Activated CD4-positive, alpha-beta T cell treated with anti-CD3 and anti-CD28 coated beads for 36 hours (primary cell): ENCODE measurements at regions of chr7 and their contacts with region 1.

Region 1: GRCh38 chr7:92904292-92905131 is 68.1 kb upstream of the CDK6 start:
- DNase-seq: peak; percentile 94
- ATAC-seq: peak; percentile 96
- H3K4me3 Mint-ChIP-seq: peak overlapping the region; percentile 19
- H3K27ac Mint-ChIP-seq: peak overlapping the region; percentile 89
- H3K4me1 Mint-ChIP-seq: peaks cover 30% of the 10 kb centered on the region
- H3K27me3 Mint-ChIP-seq: peaks cover 4% of the 10 kb centered on the region

Region 2: GRCh38 chr7:92682903-92683539 is 221.5 kb before region 1 on chr7:
- CTCF ChIA-PET with region 1: no interaction called
- POLR2A ChIA-PET with region 1: no interaction called
- intact Hi-C with region 1: loop called in 1 of 2 experiments (anchors 2 kb)
- DNase-seq: no peak
- ATAC-seq: peak; percentile 53
- H3K4me3 Mint-ChIP-seq: peak overlapping the region; percentile 39
- H3K27ac Mint-ChIP-seq: peak overlapping the region; percentile 88
- H3K4me1 Mint-ChIP-seq: peaks cover 83% of the 10 kb centered on the region
- H3K27me3 Mint-ChIP-seq: no peaks in the 10 kb centered on the region

Region 3: GRCh38 chr7:92731335-92732063 is 173.0 kb before region 1 on chr7:
- CTCF ChIA-PET with region 1: no interaction called
- POLR2A ChIA-PET with region 1: no interaction called
- intact Hi-C with region 1: loop called (anchors 1 kb)
- DNase-seq: peak; percentile 68
- ATAC-seq: peak; percentile 72
- H3K4me3 Mint-ChIP-seq: peak overlapping the region; percentile 21
- H3K27ac Mint-ChIP-seq: peak overlapping the region; percentile 88
- H3K4me1 Mint-ChIP-seq: peaks cover 61% of the 10 kb centered on the region
- H3K27me3 Mint-ChIP-seq: no peaks in the 10 kb centered on the region

Region 4: GRCh38 chr7:92806496-92806895 is 98.0 kb before region 1 on chr7:
- CTCF ChIA-PET with region 1: no interaction called
- POLR2A ChIA-PET with region 1: no interaction called
- intact Hi-C with region 1: no loop called
- DNase-seq: no peak
- ATAC-seq: no peak
- H3K4me3 Mint-ChIP-seq: no peak overlapping the region
- H3K27ac Mint-ChIP-seq: no peak overlapping the region
- H3K4me1 Mint-ChIP-seq: peaks cover 63% of the 10 kb centered on the region
- H3K27me3 Mint-ChIP-seq: no peaks in the 10 kb centered on the region

Region 5: DNA sequence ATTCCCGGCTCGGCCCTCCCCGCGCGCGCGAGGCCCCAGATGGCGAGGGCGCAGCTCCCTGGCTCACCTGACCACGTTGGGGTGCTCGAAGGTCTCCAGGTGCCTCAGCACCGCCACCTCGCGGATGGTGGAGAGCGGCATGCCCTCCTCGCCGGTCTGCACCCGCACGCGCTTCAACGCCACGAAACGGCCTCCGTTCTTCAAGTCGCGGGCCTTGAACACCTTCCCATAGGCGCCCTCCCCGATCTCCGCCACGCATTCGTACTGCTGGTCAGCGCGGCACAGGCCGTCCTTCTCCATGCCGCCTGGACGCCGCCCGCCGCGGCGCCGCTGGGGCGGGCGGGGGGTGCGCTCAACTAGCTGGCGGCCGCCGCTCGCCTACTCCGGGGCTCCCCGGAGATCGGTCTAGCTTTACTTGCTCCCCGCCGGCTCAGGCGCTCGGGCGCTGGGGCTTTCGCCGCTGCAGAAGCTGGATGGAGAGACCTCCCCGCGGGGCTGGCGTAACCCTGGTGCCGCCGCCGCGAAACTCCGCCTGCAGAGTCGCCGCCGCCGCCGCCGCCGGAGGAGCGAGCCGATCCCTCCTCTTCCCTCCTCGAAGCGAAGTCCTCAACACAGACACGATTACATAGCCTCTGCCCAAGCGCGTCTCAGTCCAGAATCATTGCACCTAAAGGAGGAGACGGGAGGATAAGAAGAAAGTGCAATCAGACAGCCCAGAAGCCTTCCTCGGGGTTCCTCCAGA is 71.3 kb before region 1 on chr7:
- CTCF ChIA-PET with region 1: interaction called, 4 read pairs
- POLR2A ChIA-PET with region 1: interaction called, 9 read pairs
- intact Hi-C with region 1: loop called (anchors 1 kb)
- DNase-seq: peak; percentile 95
- ATAC-seq: peak; percentile 64
- H3K4me3 Mint-ChIP-seq: peak overlapping the region; percentile 96
- H3K27ac Mint-ChIP-seq: peak overlapping the region; percentile 95
- H3K4me1 Mint-ChIP-seq: peaks cover 35% of the 10 kb centered on the region
- H3K27me3 Mint-ChIP-seq: no peaks in the 10 kb centered on the region

Region 6: DNA sequence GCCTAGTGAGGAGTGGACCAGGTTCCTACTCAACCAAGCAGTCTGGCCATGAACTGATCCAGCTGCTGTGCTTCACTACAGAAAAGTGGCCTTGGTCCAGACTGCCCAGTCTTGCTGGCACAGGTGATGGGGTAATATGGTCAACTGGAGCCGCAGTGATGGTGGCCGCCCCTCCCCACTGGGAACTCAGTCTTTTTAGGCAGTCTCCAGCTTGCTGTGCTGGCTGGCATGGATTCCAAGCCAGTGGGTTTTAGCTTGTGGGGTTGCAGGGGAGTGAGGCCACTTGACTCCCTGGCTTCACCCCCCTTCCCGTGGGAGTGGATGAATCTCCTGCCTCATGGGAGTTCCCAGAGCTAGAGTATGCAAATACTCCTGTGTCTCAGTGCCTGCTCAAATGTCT is 15.4 kb before region 1 on chr7:
- CTCF ChIA-PET with region 1: no interaction called
- POLR2A ChIA-PET with region 1: no interaction called
- intact Hi-C with region 1: no loop called
- DNase-seq: no peak
- ATAC-seq: no peak
- H3K4me3 Mint-ChIP-seq: no peak overlapping the region
- H3K27ac Mint-ChIP-seq: no peak overlapping the region
- H3K4me1 Mint-ChIP-seq: no peaks in the 10 kb centered on the region
- H3K27me3 Mint-ChIP-seq: peaks cover 18% of the 10 kb centered on the region

Region 7: DNA sequence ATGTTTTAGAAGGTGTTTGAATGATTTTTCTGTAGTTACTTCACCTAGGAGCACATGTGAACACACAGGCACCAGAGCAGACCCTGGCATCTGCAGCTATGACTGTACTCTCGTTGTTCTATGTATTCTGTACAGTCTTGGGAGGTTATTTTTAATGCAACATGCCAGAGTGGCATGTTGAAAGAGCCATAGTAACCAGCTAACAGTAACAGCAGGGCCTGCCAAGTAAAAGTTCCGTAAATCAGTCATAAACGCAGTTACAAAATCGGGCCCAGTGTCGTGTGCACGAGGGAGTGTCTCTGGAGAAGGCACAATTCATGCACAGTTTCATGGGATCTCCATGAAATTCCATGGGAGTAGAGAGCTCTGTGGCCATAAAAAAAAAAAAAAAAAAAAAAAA is 40.1 kb after region 1 on chr7:
- CTCF ChIA-PET with region 1: no interaction called
- POLR2A ChIA-PET with region 1: no interaction called
- intact Hi-C with region 1: loop called in 1 of 2 experiments (anchors 2 kb)
- DNase-seq: no peak
- ATAC-seq: no peak
- H3K4me3 Mint-ChIP-seq: no peak overlapping the region
- H3K27ac Mint-ChIP-seq: no peak overlapping the region
- H3K4me1 Mint-ChIP-seq: peaks cover 13% of the 10 kb centered on the region
- H3K27me3 Mint-ChIP-seq: peaks cover 7% of the 10 kb centered on the region

Region 8: DNA sequence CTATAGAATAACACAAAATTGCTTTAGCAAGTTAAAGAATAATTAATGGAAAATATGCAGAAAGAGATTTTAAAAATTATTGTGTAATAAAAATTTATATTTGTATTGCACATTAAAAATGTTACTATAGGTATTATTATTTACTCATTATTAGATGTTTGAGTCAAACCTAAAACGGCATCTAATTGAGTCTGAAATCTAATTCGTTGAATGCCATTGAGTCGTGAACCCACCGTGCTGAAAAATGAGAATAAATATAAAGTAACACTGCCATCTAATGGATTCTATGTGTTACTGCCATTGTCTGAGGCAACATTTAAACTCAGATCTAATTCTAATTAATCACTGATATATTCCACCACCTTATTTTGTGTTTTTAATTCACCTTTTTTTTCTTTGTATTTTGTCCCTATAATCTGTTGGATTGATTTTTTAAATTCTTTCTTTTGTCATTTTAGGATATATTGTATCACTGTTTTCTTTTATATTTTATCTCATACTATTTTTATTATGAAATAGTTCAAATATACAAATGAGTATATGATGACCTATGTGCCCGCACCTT is 151.1 kb after region 1 on chr7:
- CTCF ChIA-PET with region 1: no interaction called
- POLR2A ChIA-PET with region 1: no interaction called
- intact Hi-C with region 1: loop called in 1 of 2 experiments (anchors 2 kb)
- DNase-seq: no peak
- ATAC-seq: peak; percentile 74
- H3K4me3 Mint-ChIP-seq: no peak overlapping the region
- H3K27ac Mint-ChIP-seq: no peak overlapping the region
- H3K4me1 Mint-ChIP-seq: peaks cover 9% of the 10 kb centered on the region
- H3K27me3 Mint-ChIP-seq: peaks cover 13% of the 10 kb centered on the region